ENCODE measurements at regions of chr11 and their contacts with region 1.

Region 1: GRCh38 chr11:103844327-103845215 is 191.9 kb upstream of the DDI1 start:
- DNase-seq: no peak
- ATAC-seq: no peak
- H3K4me3 ChIP-seq: no peak overlapping the region
- H3K27ac ChIP-seq: no peak overlapping the region
- H3K4me1 ChIP-seq: peaks cover 2% of the 10 kb centered on the region; the same call in 1 of the 2 replicates
- H3K27me3 ChIP-seq: no peaks in the 10 kb centered on the region
- CTCF ChIP-seq: no peak
- POLR2A ChIP-seq: no peak
- RAD21 ChIP-seq: no peak

Region 2: GRCh38 chr11:103898065-103898464 is 53.5 kb after region 1 on chr11:
- CTCF ChIA-PET with region 1: no interaction called
- POLR2A ChIA-PET with region 1: no interaction called
- dilution Hi-C with region 1: no loop called
- in situ Hi-C with region 1: no loop called
- intact Hi-C with region 1: loop called (anchors 5 kb)
- DNase-seq: no peak
- ATAC-seq: no peak
- H3K4me3 ChIP-seq: no peak overlapping the region
- H3K27ac ChIP-seq: no peak overlapping the region
- H3K4me1 ChIP-seq: peaks cover 8% of the 10 kb centered on the region
- H3K27me3 ChIP-seq: no peaks in the 10 kb centered on the region
- CTCF ChIP-seq: no peak
- POLR2A ChIP-seq: no peak
- RAD21 ChIP-seq: no peak